PC-9 (cell line): ENCODE measurements at regions of chr3 and their contacts with region 1.

Region 1: GRCh38 chr3:196793235-196793641 is 53.6 kb downstream of the PAK2 start:
- DNase-seq: peak; percentile 80 to 100
- H3K4me3 ChIP-seq: peak overlapping the region; percentile 37; the same call in 1 of the 2 replicates
- H3K27ac ChIP-seq: peak overlapping the region; percentile 92
- H3K4me1 ChIP-seq: peaks cover 81% of the 10 kb centered on the region
- H3K27me3 ChIP-seq: no peaks in the 10 kb centered on the region
- CTCF ChIP-seq: no peak

Region 2: DNA sequence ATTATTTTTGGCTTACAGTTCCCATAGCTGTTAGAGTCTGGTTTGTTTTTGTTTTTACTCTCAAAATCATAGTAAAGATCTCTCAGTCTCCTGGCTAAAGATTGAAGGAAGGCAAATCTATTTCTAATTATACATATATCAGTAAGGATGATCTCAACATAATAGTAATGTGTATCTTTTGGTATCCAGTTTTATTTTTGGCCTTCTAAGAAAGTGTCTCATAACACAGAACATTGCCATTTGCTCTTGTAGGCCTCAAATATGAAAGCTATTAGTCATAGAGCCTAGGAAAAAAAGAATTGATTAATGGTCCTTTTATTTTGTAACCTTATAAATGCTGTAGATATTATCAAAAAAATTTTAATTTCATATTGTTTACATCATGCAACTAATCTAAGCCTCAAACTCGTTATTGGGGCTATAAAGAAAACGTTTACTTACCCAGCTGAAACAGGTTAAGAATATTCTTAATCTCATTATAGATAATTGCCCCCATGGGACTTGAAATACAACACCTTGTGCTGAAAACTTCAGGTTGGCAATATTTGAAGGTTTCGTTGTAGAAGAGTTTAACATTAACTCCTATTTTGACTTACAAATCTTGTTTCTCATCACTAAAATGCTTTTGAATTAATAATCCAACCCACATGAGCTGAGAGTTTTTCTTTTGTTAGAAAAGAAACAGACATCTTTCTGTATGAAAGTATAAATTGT is 208.0 kb before region 1 on chr3:
- CTCF ChIA-PET with region 1: no interaction called
- POLR2A ChIA-PET with region 1: no interaction called
- intact Hi-C with region 1: no loop called
- DNase-seq: peak in 1 of 2 experiments; percentile 9
- H3K4me3 ChIP-seq: no peak overlapping the region
- H3K27ac ChIP-seq: no peak overlapping the region
- H3K4me1 ChIP-seq: no peaks in the 10 kb centered on the region
- H3K27me3 ChIP-seq: no peaks in the 10 kb centered on the region
- CTCF ChIP-seq: no peak

Region 3: GRCh38 chr3:196849180-196849741 is 56.0 kb after region 1 on chr3:
- CTCF ChIA-PET with region 1: no interaction called
- POLR2A ChIA-PET with region 1: no interaction called
- intact Hi-C with region 1: no loop called
- DNase-seq: no peak
- H3K4me3 ChIP-seq: no peak overlapping the region
- H3K27ac ChIP-seq: no peak overlapping the region
- H3K4me1 ChIP-seq: no peaks in the 10 kb centered on the region; the same call in 1 of the 2 replicates
- H3K27me3 ChIP-seq: no peaks in the 10 kb centered on the region
- CTCF ChIP-seq: no peak

Region 4: GRCh38 chr3:196875258-196875657 is 82.0 kb after region 1 on chr3:
- CTCF ChIA-PET with region 1: no interaction called
- POLR2A ChIA-PET with region 1: interaction called, 17 read pairs
- intact Hi-C with region 1: loop called (anchors 1 kb)
- DNase-seq: no peak
- H3K4me3 ChIP-seq: no peak overlapping the region
- H3K27ac ChIP-seq: no peak overlapping the region
- H3K4me1 ChIP-seq: no peaks in the 10 kb centered on the region
- H3K27me3 ChIP-seq: no peaks in the 10 kb centered on the region
- CTCF ChIP-seq: no peak

Region 5: GRCh38 chr3:197093871-197094270 is 300.6 kb after region 1 on chr3:
- CTCF ChIA-PET with region 1: no interaction called
- POLR2A ChIA-PET with region 1: interaction called, 27 read pairs
- intact Hi-C with region 1: no loop called
- DNase-seq: no peak
- H3K4me3 ChIP-seq: no peak overlapping the region
- H3K27ac ChIP-seq: no peak overlapping the region
- H3K4me1 ChIP-seq: no peaks in the 10 kb centered on the region
- H3K27me3 ChIP-seq: no peaks in the 10 kb centered on the region
- CTCF ChIP-seq: no peak